ENCODE measurements at regions of chr20 and their contacts with region 1.

Region 1: GRCh38 chr20:54649511-54649962 is 174.1 kb downstream of the DOK5 start:
- ATAC-seq: peak; percentile 68 to 96 (median 92)
- H3K4me3 ChIP-seq: no peak overlapping the region
- H3K27ac ChIP-seq: no peak overlapping the region
- H3K4me1 ChIP-seq: peaks cover 11 to 13% of the 10 kb centered on the region in 2 donors

Region 2: DNA sequence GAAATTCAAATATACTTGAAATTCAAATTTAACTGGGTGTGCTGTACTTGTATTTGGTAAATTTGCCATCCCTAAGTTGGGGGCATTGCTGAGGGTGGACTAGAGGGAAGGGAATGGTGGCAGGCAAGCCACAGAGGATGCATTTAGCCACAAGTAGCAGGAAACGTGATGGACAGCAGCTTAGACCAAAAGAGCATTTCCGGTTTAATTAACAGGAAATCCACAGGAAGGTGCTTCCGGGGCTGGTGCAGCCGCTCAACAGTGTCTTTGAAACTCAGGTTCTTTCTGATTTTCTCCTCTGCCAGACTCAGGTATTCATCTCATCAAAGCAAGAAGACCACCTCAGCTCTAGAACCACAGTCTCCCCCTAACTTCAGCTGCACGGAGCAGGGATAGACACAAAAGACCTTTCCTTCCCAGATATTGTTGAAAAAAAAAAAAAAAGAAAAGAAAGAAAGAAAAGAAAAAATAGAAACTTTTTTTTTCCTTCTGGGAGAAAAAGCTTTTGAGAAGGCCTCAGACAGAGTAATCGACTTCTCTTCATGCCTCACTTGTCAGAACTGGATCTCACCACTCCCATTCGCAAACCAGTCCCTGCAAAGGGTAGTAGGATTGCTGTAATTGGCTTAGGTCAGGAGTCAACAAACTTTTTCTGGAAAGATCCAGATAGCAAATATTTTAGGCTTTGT is 571.1 kb before region 1 on chr20:
- in situ Hi-C with region 1: loop called in 3 of 9 experiments (anchors 25 kb)
- ATAC-seq: no peak
- H3K4me3 ChIP-seq: no peak overlapping the region
- H3K27ac ChIP-seq: no peak overlapping the region
- H3K4me1 ChIP-seq: no peaks in the 10 kb centered on the region

Region 3: DNA sequence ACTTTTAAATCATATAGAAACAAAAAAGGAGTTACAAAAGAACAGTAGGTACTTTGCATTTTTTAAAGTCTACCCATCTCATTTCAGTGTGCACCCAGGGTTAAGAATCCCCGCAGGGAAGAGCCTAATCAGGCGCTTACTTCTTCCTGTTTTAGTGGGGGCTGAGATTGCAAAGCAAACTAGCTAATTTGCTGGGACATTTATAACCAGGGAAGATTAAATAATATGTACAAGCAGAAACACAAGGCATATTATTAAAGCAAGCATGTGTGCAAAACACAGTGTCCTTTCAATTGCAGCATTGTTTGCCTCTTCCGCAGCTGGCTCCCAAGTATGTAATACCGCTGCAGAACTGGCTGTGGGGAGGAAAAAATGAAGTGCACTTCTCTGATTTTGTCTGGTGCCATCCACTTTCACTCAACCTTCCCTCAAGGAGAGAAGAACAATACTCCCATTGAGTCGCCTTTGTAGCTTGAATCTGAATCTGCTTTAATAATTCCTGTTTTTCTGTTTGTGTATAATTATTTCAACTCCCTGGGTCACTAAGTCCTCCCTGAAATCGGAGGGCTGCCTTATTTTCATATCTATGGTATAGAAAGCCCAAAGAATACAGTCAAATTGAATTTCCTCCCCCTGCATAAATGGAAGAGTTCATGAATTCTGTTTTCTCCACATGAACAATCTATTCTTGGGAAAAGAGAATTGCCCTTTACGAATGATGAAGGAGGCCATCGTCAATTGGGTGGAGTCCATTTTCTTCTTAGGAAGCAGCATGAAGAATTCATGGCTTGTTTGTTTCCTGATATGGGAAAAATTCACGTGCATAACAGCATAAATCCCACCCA is 555.9 kb before region 1 on chr20:
- in situ Hi-C with region 1: loop called in 4 of 9 experiments (anchors 10 to 25 kb)
- ATAC-seq: peak in 1 of 8 experiments; percentile 55
- H3K4me3 ChIP-seq: no peak overlapping the region
- H3K27ac ChIP-seq: no peak overlapping the region
- H3K4me1 ChIP-seq: no peaks in the 10 kb centered on the region

Region 4: DNA sequence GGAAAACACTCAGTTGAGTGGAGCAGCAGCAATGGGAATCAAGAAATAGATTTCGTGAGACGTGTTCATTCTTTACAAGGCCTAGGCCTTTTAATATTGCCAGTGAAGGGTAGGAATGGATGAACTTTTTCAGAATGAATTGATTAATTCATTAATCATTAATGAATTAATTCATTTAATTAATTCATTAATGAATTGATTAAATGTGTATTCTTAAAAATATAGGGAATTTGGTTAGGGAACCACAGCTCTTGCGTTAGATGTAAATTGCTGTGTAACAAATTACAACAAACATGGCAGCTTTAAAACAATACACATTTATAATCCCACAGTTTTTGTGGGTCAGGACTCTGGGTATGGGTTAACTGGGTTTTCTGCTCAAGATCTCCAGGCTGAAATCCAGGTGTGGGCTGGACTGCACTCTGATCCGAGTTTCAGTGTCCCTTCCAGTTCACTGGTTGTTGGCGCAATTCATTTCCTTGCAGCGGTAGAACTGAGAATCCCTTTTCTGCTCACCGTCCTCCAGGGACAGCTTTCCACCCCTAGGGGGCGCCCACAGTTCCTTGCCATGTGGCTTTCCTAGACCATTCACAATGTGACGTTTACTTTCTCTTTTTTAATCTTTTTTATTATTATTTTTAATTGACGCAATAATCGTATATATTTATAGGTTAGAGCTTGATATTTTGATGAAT is 546.3 kb before region 1 on chr20:
- in situ Hi-C with region 1: loop called in 6 of 9 experiments (anchors 10 to 25 kb)
- ATAC-seq: peak in 4 of 8 experiments; percentile 56 to 91 (median 77)
- H3K4me3 ChIP-seq: no peak overlapping the region
- H3K27ac ChIP-seq: no peak overlapping the region
- H3K4me1 ChIP-seq: no peaks in the 10 kb centered on the region

Region 5: DNA sequence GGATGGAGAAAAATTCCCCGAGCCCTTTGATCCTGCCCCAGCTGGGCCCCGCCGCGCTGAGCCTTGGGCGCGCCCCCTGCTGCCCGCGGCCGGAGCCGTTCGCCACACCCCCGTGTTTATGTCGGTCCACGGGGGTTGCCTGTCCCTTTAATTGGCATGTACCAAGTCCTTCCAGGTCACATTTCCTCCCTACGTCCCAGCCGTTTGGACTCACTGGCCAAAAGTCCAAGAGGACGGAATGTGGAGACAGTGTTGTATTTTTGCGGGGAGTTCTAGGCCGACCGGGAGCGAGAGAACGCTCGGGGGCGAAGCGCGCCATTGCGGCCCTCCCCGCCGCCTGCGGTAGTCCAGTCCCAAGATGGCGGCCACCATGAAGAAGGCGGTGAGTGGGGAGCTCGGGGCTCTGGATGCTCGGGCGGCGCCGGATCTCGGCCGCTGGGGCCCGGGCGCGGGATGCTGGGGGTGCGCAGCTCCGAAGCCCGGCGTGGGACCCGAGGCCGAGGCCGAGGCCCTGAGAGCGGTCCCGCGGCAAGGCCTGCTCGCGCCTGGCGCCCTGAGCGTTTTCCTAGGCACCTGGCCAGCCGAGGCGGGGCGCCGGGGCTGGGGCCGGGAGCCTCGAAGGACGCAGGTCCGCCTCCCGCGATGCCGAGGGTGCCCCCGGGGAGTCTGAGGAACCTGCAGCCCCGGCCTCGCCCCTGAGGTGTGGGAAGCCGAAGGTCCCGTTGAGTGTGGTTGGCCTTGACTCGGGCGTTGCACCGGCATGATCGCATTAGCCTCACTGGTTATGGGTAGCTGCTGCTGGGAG is 441.6 kb before region 1 on chr20 and contains the start of gene PFDN4:
- in situ Hi-C with region 1: loop called in 4 of 9 experiments (anchors 25 kb)
- ATAC-seq: peak; percentile 90 to 98 (median 98)
- H3K4me3 ChIP-seq: peak within 1 kb of the TSS; percentile 77 to 96 (median 93)
- H3K27ac ChIP-seq: peak within 1 kb of the TSS; percentile 99 to 100
- H3K4me1 ChIP-seq: peaks cover 4 to 11% of the 10 kb centered on the region in 2 donors
- total RNA-seq, gene PFDN4: 77.6 to 149 (median 137) TPM

Region 6: DNA sequence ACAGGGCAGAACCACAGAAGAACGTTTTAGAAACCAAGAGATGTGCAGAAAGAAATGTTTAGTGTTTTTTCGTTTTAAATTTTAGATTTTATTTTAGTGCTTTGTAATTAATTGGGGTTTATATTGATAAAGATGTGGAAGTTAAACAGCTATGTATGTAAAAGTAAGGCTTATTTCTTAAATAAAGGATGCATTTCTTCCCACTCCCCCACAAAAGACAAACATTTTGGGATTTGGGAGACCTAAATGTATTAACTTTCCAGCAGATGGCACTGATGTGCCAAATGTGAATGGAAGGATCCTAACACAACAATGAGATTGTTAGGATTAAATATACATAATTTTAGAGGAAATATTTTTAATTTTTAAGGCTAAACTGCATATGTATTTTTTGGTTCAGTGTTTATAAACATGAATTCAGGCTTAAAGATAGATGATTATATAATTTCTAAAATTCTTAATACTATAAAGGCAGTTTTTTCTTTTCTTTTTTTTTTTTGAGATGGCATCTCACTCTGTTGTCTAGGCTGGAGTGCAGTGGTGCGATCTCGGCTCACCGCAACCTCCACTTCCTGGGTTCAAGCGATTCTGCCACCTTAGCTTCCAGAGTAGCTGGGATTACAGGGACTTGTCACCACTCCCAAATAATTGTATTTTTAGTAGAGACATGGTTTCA is 429.6 kb before region 1 on chr20:
- in situ Hi-C with region 1: loop called in 7 of 9 experiments (anchors 5 to 25 kb)
- ATAC-seq: peak in 2 of 8 experiments; percentile 20 to 68
- H3K4me3 ChIP-seq: no peak overlapping the region
- H3K27ac ChIP-seq: no peak overlapping the region
- H3K4me1 ChIP-seq: no peaks in the 10 kb centered on the region

Region 7: GRCh38 chr20:54475334-54476168 is 174.0 kb before region 1 on chr20 and contains the start of gene DOK5:
- in situ Hi-C with region 1: loop called in 1 of 9 experiments (anchors 25 kb)
- ATAC-seq: peak; percentile 65 to 86 (median 80)
- H3K4me3 ChIP-seq: peak within 1 kb of the TSS; percentile 41 to 83 (median 65)
- H3K27ac ChIP-seq: no peak within 1 kb of the TSS
- H3K4me1 ChIP-seq: peaks cover 7 to 15% of the 10 kb centered on the region in 2 donors
- total RNA-seq, gene DOK5: 0.31 to 92.8 (median 32.9) TPM

Region 8: GRCh38 chr20:54829235-54829634 is 179.7 kb after region 1 on chr20:
- in situ Hi-C with region 1: no loop called
- ATAC-seq: no peak
- H3K4me3 ChIP-seq: no peak overlapping the region
- H3K27ac ChIP-seq: no peak overlapping the region
- H3K4me1 ChIP-seq: no peaks in the 10 kb centered on the region

Measured in motor neuron (in vitro differentiated cells).